ENCODE measurements at regions of chr3 and their contacts with region 1.

Region 1: DNA sequence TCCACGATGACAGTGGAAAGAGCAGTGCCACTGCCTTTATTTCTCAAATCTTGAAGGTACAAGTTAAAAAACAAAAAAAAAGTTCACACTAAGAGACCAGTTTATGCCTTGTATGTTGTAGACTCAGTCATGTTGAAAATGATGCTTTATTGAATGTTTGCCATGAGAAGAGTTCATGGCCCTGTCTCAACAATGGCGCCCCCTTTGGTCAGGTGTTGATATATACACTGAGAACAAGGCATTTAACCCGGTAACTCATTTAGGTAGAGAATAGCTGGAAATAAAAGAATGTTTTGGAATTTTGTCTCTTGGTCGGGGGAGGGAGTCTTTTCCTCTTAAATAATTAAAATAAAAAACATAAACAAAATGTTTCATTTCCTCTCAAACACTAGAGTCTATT is 145.6 kb upstream of the SLC2A2 start:
- DNase-seq: no peak
- ATAC-seq: no peak
- H3K4me3 ChIP-seq: no peak overlapping the region
- H3K27ac ChIP-seq: no peak overlapping the region
- H3K4me1 ChIP-seq: peaks cover 0 to 32% (median 15%) of the 10 kb centered on the region in 12 donors
- H3K27me3 ChIP-seq: no peaks in the 10 kb centered on the region
- CTCF ChIP-seq: peak in 6 of 12 donors; percentile 6 to 26 (median 16)
- POLR2A ChIP-seq: no peak

Region 2: DNA sequence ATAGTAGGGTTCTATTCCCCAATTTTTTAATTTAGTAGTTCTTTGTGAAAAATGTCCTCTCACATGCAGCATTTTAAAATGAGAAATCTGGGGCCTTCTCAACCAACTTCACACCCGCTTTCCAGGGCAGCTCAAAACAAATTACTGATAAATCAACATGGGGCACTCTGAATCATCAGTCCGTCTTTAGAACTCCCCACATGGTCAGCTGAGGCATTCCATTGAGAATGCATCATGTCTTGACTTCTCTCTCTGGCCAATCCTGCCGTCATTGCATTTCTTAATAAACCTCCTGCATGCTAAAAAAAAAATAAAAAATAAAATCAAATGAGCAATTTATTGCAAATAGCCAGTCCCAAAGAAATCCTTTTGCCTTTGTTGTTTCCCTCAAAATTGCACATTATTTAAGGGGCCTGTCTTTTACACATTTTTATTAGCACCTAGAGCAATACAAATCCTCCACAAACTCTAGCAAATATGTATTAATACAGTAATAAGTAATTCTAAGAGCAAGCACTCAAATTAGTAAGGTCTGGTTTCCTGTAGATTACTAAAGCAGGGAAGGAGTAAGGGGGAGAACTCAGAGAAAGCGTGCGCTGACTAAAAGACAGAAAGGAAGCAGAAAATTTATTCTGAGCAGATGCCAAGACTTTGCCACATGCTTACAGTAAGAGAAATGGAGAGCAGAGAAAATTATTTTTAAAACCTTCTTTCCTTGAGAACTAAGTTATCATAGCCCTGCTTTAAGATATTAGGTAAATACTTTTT is 112.4 kb after region 1 on chr3:
- intact Hi-C with region 1: loop called in 1 of 10 experiments (anchors 10 kb)
- DNase-seq: peak in 2 of 5 donors; percentile 36 to 48
- ATAC-seq: peak; percentile 66 to 91 (median 77)
- H3K4me3 ChIP-seq: no peak overlapping the region
- H3K27ac ChIP-seq: peak overlapping the region in 11 of 12 donors; percentile 19 to 81 (median 63)
- H3K4me1 ChIP-seq: peaks cover 0 to 52% (median 30%) of the 10 kb centered on the region in 12 donors
- H3K27me3 ChIP-seq: no peaks in the 10 kb centered on the region
- CTCF ChIP-seq: no peak
- POLR2A ChIP-seq: no peak

Measured in heart left ventricle (tissue), 16 donors.